Posterior cingulate gyrus (tissue), 11 donors: ENCODE measurements at regions of chr7 and their contacts with region 1.

Region 1: GRCh38 chr7:135662373-135663114 is at the start of gene STMP1:
- DNase-seq: peak; percentile 91 to 99 (median 95)

Region 2: DNA sequence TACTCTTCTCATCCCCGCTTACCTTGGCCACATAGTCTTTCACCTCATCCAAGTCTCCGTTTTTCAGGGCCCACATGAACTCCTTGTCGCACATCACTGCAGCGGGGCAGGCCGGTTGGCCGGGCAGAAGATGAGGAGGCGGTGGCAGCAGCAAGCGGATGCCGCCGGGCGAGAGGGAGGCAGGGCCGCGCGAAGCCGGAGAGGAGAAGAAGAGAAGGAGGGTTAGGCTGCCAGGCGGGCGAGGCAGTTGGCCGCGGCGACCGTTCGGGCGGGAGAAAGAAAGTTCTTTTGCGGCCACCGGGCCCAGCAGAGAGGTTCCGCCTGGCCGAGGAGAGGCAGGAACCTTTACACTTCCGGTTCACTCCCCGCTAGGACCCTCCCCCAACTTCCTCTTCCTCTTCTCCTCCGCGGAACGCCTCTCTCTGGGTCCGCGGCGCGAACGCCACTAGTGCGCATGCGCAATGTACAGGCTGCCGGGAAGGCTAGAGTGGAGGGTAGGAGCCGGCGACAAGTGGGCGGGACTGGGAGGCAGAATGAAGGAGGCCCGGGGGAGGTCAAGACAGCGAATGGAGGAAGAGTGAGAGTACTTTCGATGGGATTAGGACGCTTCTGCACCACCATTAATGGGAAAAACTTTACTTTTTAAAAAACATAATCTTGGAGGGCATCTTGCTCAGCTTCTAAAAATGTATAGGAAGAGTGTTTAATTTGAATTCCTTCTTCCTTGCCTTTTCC is 314.6 kb after region 1 on chr7 and contains the start of gene MTPN:
- intact Hi-C with region 1: loop called (anchors 10 kb)
- DNase-seq: peak; percentile 95 to 100 (median 98)